ENCODE measurements at regions of chr14 and their contacts with region 1.

Region 1: DNA sequence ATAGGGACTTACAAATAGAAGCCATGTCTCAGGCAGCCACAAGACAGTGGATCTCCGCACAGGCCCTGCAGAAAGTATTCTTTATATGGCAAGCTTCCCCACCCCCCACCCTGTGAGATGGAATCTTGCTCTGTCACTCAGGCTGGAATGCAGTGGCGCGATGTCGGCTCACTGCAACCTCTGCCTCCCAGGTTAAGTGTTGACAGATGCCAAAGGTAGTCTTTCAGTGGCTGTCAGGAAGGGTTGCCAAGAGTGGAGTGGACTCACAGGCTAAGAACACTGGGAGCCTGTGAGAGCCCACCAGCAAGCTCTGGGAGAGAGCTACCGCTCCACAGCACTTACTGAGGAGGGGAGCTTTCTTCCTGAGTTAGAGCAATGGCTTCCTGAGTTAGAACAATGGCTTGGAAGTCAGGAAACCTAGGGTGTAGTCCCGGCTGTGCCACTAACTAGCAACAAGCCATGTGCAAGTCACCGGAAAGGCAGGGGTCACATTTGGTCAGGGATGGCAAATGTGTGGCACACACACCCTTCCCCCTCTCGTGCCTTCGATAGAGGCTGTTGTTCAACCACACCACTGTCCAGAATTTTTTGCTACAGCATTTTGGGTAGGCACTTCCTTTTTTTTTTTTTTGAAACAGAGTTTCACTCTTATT is 2.6 kb downstream of the RNASE1 start:
- DNase-seq: peak; percentile 70 to 73 (median 72)
- ATAC-seq: peak; percentile 73 to 81
- H3K4me3 ChIP-seq: peak overlapping the region; percentile 48
- H3K27ac ChIP-seq: peak overlapping the region; percentile 96
- H3K4me1 ChIP-seq: peaks cover 2% of the 10 kb centered on the region
- H3K27me3 ChIP-seq: no peaks in the 10 kb centered on the region

Region 2: DNA sequence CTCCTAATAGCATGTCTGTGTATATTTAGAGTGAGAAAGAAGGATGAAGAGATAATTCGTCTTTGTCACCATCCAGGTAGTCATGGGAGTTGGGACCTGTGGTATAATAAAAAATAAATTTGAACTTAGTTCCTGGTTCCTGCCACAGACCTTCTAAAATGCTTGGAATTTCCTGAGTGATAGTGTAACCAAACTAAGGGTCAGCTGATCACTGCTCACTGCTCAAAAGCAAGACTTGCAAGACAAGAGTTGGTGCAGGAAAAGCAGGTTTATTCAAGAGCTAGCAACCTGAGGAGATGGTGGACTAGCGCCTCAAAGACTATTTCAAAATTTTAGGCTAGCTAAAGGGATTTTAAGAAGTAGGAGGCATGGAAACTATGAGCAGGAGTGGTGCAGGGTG is 92.4 kb before region 1 on chr14:
- intact Hi-C with region 1: loop called in 1 of 4 experiments (anchors 10 kb)
- DNase-seq: no peak
- ATAC-seq: peak in 1 of 2 donors; percentile 50
- H3K4me3 ChIP-seq: no peak overlapping the region
- H3K27ac ChIP-seq: no peak overlapping the region
- H3K4me1 ChIP-seq: peaks cover 2% of the 10 kb centered on the region
- H3K27me3 ChIP-seq: no peaks in the 10 kb centered on the region

Measured in right cardiac atrium (tissue), 5 donors.